ENCODE measurements at regions of chr15 and their contacts with region 1.

Region 1: GRCh38 chr15:43285609-43286037 is 18.9 kb upstream of the TGM5 start:
- DNase-seq: peak; percentile 68
- ATAC-seq: peak; percentile 66
- H3K4me3 Mint-ChIP-seq: no peak overlapping the region
- H3K27ac Mint-ChIP-seq: no peak overlapping the region
- H3K4me1 Mint-ChIP-seq: peaks cover 2% of the 10 kb centered on the region
- H3K27me3 Mint-ChIP-seq: peaks cover 3% of the 10 kb centered on the region

Region 2: GRCh38 chr15:43194795-43195194 is 90.8 kb before region 1 on chr15:
- CTCF ChIA-PET with region 1: interaction called, 13 read pairs
- POLR2A ChIA-PET with region 1: no interaction called
- intact Hi-C with region 1: no loop called
- DNase-seq: no peak
- ATAC-seq: no peak
- H3K4me3 Mint-ChIP-seq: no peak overlapping the region
- H3K27ac Mint-ChIP-seq: no peak overlapping the region
- H3K4me1 Mint-ChIP-seq: no peaks in the 10 kb centered on the region
- H3K27me3 Mint-ChIP-seq: no peaks in the 10 kb centered on the region

Region 3: DNA sequence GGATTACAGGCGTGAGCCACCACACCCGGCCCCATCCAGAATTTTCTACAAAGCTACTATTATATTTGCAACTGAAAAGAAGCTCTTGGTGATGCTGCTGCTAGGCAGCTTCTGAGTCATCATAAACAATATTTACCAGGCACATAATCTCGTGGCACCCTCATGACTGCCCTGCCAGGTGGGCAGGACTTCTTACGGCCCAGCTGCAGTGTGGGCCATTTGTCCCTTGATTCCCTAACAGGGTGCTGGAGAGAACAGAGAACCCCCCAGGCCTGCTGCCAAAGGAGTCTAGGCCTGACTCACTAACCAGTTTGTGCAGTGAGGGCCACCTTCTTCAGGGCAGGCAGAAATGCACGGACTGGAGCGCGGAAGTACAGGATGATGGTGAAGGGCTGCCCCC is 69.7 kb before region 1 on chr15:
- CTCF ChIA-PET with region 1: interaction called, 13 read pairs
- POLR2A ChIA-PET with region 1: no interaction called
- intact Hi-C with region 1: no loop called
- DNase-seq: no peak
- ATAC-seq: no peak
- H3K4me3 Mint-ChIP-seq: no peak overlapping the region
- H3K27ac Mint-ChIP-seq: no peak overlapping the region
- H3K4me1 Mint-ChIP-seq: no peaks in the 10 kb centered on the region
- H3K27me3 Mint-ChIP-seq: peaks cover 3% of the 10 kb centered on the region

Region 4: GRCh38 chr15:43230640-43231115 is 54.9 kb before region 1 on chr15:
- CTCF ChIA-PET with region 1: interaction called, 118 read pairs
- POLR2A ChIA-PET with region 1: interaction called, 3 read pairs
- intact Hi-C with region 1: loop called (anchors 1 kb)
- DNase-seq: no peak
- ATAC-seq: no peak
- H3K4me3 Mint-ChIP-seq: no peak overlapping the region
- H3K27ac Mint-ChIP-seq: no peak overlapping the region
- H3K4me1 Mint-ChIP-seq: peaks cover 3% of the 10 kb centered on the region
- H3K27me3 Mint-ChIP-seq: peaks cover 3% of the 10 kb centered on the region

Region 5: GRCh38 chr15:43268111-43269105 is 17.2 kb before region 1 on chr15:
- CTCF ChIA-PET with region 1: interaction called, 21 read pairs
- POLR2A ChIA-PET with region 1: no interaction called
- intact Hi-C with region 1: no loop called
- DNase-seq: peak; percentile 50
- ATAC-seq: no peak
- H3K4me3 Mint-ChIP-seq: no peak overlapping the region
- H3K27ac Mint-ChIP-seq: no peak overlapping the region
- H3K4me1 Mint-ChIP-seq: peaks cover 5% of the 10 kb centered on the region
- H3K27me3 Mint-ChIP-seq: peaks cover 10% of the 10 kb centered on the region

Region 6: DNA sequence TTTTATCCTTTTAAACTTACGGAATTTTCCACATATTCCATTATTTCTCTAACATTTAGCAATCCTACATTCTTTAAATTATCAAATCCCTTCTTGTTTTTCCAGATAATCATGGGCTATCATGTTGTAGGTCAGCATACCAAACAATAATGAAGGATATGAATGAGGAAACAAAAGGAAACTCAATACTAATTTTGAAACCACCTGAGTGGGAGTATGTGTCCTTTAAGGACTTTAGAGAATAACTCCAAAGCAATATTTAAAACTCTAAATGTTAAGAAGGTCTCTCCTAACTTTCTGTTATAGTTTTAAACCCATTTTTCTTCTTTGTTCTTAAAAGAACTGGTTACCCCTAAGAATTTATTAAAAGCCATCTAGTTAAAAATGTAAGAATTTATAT is 164.4 kb after region 1 on chr15:
- CTCF ChIA-PET with region 1: no interaction called
- POLR2A ChIA-PET with region 1: no interaction called
- intact Hi-C with region 1: no loop called
- DNase-seq: no peak
- ATAC-seq: no peak
- H3K4me3 Mint-ChIP-seq: no peak overlapping the region
- H3K27ac Mint-ChIP-seq: no peak overlapping the region
- H3K4me1 Mint-ChIP-seq: peaks cover 14% of the 10 kb centered on the region
- H3K27me3 Mint-ChIP-seq: no peaks in the 10 kb centered on the region